ENCODE measurements at regions of chr6 and their contacts with region 1.

Region 1: DNA sequence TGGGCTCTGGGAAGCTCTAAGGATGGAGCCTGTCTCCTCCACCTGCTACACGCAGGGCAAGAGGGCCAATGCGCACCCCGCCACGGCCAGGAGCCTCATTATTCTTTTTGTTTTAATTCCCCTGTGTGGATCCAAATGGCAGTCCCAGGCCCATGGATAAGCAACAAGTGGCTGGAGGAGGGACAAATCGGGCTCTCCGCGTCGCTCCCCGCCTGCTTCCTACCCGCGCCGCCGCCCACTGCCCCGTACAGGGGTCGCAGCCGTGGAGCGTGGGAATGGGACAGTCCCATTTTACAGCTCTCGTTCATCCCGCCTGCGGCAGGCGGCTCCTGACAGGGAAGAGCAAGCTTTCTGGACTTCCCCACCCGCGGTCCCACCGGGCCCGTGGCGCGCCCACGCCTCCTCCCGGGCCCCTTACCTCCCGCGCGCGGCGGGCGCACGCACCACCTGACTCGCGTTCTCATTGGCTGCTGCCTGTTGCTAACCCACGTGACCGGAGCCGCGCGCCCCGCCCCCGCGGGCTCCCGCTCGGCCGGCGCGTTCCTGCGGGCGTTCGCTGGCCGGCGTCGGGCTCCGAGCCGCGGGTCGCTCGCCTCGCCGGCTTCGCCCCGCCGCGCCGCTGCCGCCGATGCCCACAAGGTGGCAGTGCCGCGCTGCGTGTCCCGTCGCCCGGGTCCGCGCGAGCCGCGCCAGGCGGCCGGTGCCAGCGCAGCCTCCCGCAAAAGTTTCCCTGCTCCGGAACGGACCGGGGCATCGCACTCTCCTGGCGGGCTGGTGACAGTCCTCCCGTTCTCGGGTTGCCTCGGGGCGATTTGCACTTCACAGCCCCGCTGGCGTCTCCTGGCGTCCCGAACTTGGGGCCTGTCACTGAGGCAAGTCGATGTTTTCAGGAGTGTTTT is 93.3 kb downstream of the CD83 start:
- DNase-seq: peak; percentile 79 to 98 (median 87)
- ATAC-seq: peak; percentile 95
- H3K4me3 ChIP-seq: peak overlapping the region; percentile 73
- H3K4me3 Mint-ChIP-seq: peak overlapping the region; percentile 81 to 90 (median 87)
- H3K27ac ChIP-seq: peak overlapping the region; percentile 65
- H3K27ac Mint-ChIP-seq: peak overlapping the region; percentile 6 to 93 (median 73)
- H3K4me1 ChIP-seq: peaks cover 8 to 14% of the 10 kb centered on the region in 2 donors
- H3K4me1 Mint-ChIP-seq: peaks cover 0 to 15% (median 11%) of the 10 kb centered on the region in 7 donors
- H3K27me3 ChIP-seq: no peaks in the 10 kb centered on the region
- H3K27me3 Mint-ChIP-seq: no peaks in the 10 kb centered on the region

Region 2: DNA sequence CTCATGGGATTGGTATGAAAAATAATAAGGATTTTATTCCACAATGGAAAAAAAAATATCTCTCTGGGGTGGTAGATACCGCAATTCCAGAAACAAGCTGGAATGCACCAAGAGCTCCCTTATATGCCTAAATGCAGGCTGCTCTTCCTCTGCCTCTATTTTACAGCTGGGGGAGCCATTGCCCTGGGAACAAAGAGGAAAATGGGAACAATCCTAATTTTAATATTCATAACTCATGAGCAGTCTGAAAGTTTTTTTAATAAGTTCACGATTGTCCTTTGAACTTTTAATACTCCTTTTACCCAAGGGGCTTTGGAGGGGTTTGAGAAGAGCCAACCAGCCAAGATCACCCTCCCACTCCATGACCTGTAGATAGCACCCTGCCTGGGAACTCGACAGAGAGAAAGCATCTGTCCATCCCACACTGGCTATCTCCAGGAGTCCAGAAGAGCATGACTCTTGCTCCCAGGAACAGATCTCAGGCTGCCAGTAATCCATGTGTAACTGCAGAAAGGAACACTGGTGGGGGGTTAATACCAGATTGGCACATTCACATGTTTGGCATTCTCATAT is 18.6 kb before region 1 on chr6:
- CTCF ChIA-PET with region 1: no interaction called
- POLR2A ChIA-PET with region 1: no interaction called
- intact Hi-C with region 1: no loop called
- DNase-seq: no peak
- ATAC-seq: no peak
- H3K4me3 ChIP-seq: no peak overlapping the region
- H3K4me3 Mint-ChIP-seq: no peak overlapping the region
- H3K27ac ChIP-seq: no peak overlapping the region
- H3K27ac Mint-ChIP-seq: no peak overlapping the region
- H3K4me1 ChIP-seq: no peaks in the 10 kb centered on the region
- H3K4me1 Mint-ChIP-seq: no peaks in the 10 kb centered on the region
- H3K27me3 ChIP-seq: no peaks in the 10 kb centered on the region
- H3K27me3 Mint-ChIP-seq: peaks cover 0 to 38% (median 8%) of the 10 kb centered on the region in 5 donors

Region 3: DNA sequence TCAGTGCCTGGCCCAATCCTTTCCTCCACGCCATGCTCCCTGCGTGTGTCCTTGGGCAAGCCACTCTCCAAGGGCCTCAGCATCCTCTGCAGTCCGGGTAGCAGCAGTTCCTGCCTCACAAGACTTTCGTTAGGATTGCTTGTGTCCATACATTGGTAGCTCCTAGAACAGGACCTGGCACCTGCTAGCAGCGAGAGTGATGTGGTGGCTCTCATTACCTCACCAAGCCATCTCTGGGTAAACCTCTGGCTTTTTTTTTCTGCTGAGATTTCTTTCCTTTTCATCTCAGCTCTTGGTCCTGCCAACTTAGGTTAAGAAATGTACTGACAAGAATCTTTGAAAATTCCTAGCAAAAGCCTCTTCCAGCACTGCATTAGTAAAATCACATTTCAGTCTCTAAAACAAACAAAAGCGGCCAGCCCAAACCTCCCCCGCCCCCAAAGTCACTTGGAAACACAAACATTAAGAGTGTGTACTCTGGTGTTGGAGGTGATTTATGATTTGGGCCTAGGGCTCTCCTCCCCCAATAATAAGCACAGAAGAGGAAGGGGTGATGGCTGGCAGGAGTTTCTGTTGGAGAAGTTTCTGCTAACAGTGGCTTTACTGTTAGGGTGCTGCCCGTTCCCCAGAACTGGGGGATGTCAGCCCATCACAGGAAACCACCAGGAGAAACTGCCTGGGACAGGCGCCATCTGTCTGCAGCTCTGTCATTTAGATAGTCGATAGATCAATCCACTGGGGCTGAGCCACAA is 105.9 kb after region 1 on chr6:
- CTCF ChIA-PET with region 1: interaction called, 9 read pairs
- POLR2A ChIA-PET with region 1: no interaction called
- intact Hi-C with region 1: loop called (anchors 1 kb)
- DNase-seq: peak in 3 of 9 donors; percentile 3 to 11 (median 9)
- ATAC-seq: no peak
- H3K4me3 ChIP-seq: no peak overlapping the region
- H3K4me3 Mint-ChIP-seq: no peak overlapping the region
- H3K27ac ChIP-seq: no peak overlapping the region
- H3K27ac Mint-ChIP-seq: peak overlapping the region in 3 of 9 donors; percentile 25 to 50 (median 35)
- H3K4me1 ChIP-seq: peaks cover 0 to 3% of the 10 kb centered on the region in 2 donors
- H3K4me1 Mint-ChIP-seq: peaks cover 4 to 22% (median 20%) of the 10 kb centered on the region in 7 donors
- H3K27me3 ChIP-seq: no peaks in the 10 kb centered on the region
- H3K27me3 Mint-ChIP-seq: peaks cover 0 to 4% (median 0%) of the 10 kb centered on the region in 5 donors

Region 4: GRCh38 chr6:14371530-14371929 is 160.6 kb after region 1 on chr6:
- CTCF ChIA-PET with region 1: no interaction called
- POLR2A ChIA-PET with region 1: no interaction called
- intact Hi-C with region 1: no loop called
- DNase-seq: no peak
- ATAC-seq: peak; percentile 37
- H3K4me3 ChIP-seq: no peak overlapping the region
- H3K4me3 Mint-ChIP-seq: peak overlapping the region in 6 of 10 donors; percentile 1 to 74 (median 15)
- H3K27ac ChIP-seq: no peak overlapping the region
- H3K27ac Mint-ChIP-seq: no peak overlapping the region
- H3K4me1 ChIP-seq: no peaks in the 10 kb centered on the region
- H3K4me1 Mint-ChIP-seq: peaks cover 6 to 19% (median 13%) of the 10 kb centered on the region in 7 donors
- H3K27me3 ChIP-seq: no peaks in the 10 kb centered on the region
- H3K27me3 Mint-ChIP-seq: peaks cover 0 to 4% (median 0%) of the 10 kb centered on the region in 5 donors

Region 5: DNA sequence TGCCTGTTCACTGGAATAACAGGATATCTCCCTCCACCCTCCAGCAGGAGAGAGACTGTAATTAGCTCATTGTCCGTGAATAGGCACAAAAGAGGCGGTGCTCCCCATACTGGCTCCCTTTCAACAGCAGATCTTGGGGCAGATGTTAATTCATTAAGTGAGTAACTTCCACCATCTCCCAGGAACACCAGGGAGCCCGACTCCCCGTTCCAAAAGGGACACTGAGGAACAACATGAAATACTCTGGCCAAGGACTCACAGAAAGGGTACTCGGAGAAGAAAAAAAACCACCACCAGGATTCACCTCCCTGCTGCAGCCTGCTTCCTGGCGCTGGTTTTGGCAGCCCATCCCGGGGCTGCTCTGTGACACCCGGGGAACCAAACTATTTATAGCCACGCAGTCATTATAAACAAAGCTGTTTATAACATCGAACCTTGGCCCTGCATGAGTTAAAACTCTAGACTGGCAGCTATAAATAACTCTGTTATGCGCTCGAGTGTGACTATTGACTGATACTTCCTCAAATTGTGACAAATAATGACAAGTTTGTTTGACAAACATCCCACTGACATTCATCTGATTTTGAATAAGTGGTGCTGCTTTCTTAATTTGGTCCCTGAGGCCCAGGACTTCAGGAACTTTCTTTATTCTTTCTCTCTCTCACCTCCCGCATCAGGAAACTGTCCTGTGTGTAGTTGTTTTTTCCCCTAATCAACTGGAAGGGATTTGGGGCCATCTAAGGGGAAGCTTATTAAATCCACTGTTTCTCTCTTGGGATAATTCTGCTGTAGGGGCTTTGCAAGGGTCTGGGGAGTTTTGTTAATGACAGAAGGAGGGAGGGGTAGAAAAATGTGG is 428.2 kb after region 1 on chr6:
- CTCF ChIA-PET with region 1: no interaction called
- POLR2A ChIA-PET with region 1: no interaction called
- intact Hi-C with region 1: loop called (anchors 1 kb)
- DNase-seq: no peak
- ATAC-seq: peak; percentile 54
- H3K4me3 ChIP-seq: no peak overlapping the region
- H3K4me3 Mint-ChIP-seq: peak overlapping the region in 1 of 10 donors; percentile 14
- H3K27ac ChIP-seq: no peak overlapping the region
- H3K27ac Mint-ChIP-seq: peak overlapping the region in 2 of 9 donors; percentile 25 to 46
- H3K4me1 ChIP-seq: peaks cover 27 to 29% of the 10 kb centered on the region in 2 donors
- H3K4me1 Mint-ChIP-seq: peaks cover 41 to 63% (median 52%) of the 10 kb centered on the region in 7 donors
- H3K27me3 ChIP-seq: no peaks in the 10 kb centered on the region
- H3K27me3 Mint-ChIP-seq: peaks cover 0 to 25% (median 4%) of the 10 kb centered on the region in 5 donors

Region 6: DNA sequence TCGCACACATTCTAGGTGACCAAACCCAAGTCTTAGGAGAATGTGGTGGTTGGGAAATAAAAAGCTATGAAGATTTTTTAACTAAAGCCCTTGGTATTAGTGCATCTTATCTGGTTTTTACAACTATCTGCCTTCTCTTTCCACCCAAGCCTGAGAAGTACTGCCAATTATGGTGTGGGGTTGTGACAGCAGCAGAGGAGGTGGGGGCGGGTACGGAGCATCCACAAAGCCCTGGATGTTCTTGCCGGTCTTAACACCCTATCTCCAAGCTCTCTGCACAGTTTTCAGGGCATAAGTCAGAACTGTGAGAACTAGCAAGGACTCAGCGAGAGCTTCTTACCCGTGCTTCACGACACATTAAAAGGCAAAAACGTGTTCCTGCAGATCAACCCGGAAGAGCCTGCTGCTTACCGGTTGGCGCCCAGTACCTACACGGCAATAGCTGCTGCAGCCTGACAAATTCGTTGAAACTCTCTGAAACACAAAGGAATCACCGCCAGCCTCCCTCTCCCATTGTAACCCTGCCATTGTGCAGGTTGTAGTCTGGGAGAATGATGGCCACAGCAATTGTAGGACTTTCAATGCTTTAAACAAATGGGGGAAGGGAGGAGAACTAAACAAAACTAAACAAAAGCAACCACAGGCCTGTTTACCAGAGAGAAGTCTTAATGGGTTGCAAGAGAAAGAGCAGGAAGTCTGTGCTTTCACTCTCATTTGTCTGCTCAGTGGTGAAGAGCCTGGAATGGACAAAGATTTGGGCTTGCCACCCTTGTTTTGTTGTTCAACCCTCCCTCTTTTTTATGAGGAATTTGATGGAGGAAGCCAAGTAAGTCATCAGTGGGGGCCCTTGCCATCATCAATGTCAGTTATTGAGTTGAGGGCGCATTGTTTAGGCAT is 573.9 kb after region 1 on chr6:
- CTCF ChIA-PET with region 1: no interaction called
- POLR2A ChIA-PET with region 1: no interaction called
- intact Hi-C with region 1: loop called in 1 of 2 experiments (anchors 10 kb)
- DNase-seq: peak in 7 of 9 donors; percentile 20 to 58 (median 47)
- ATAC-seq: peak; percentile 67
- H3K4me3 ChIP-seq: peak overlapping the region; percentile 18
- H3K4me3 Mint-ChIP-seq: peak overlapping the region; percentile 26 to 86 (median 82)
- H3K27ac ChIP-seq: peak overlapping the region; percentile 46
- H3K27ac Mint-ChIP-seq: peak overlapping the region; percentile 78 to 97 (median 90)
- H3K4me1 ChIP-seq: peaks cover 0 to 12% of the 10 kb centered on the region in 2 donors
- H3K4me1 Mint-ChIP-seq: peaks cover 0 to 35% (median 19%) of the 10 kb centered on the region in 7 donors
- H3K27me3 ChIP-seq: no peaks in the 10 kb centered on the region
- H3K27me3 Mint-ChIP-seq: no peaks in the 10 kb centered on the region

Region 7: DNA sequence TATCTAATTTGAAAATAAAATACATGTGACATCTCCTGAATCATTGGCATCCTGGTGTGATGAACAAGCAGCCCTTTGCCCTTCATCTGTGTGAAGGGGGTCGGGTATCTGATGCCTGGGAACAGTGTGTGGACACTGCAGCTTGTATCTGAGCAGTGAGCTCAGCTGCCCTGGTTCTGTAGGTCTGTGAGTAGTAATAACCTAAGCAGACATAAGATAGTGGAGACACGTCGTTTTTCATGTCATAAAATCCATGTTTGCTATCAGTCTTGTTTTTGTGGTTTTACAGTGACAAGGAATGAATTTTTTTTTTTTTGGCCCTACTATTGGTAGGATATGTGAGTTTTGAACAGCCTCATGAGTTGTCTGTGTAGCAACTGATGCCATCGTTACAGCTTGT is 1168.0 kb after region 1 on chr6:
- CTCF ChIA-PET with region 1: no interaction called
- POLR2A ChIA-PET with region 1: no interaction called
- intact Hi-C with region 1: no loop called
- DNase-seq: no peak
- ATAC-seq: no peak
- H3K4me3 ChIP-seq: no peak overlapping the region
- H3K4me3 Mint-ChIP-seq: peak overlapping the region in 1 of 10 donors; percentile 15
- H3K27ac ChIP-seq: no peak overlapping the region
- H3K27ac Mint-ChIP-seq: peak overlapping the region in 1 of 9 donors; percentile 67
- H3K4me1 ChIP-seq: peaks cover 6 to 19% of the 10 kb centered on the region in 2 donors
- H3K4me1 Mint-ChIP-seq: peaks cover 43 to 71% (median 61%) of the 10 kb centered on the region in 7 donors
- H3K27me3 ChIP-seq: no peaks in the 10 kb centered on the region
- H3K27me3 Mint-ChIP-seq: no peaks in the 10 kb centered on the region

Region 8: GRCh38 chr6:15441215-15441868 is 1230.4 kb after region 1 on chr6:
- CTCF ChIA-PET with region 1: no interaction called
- POLR2A ChIA-PET with region 1: no interaction called
- intact Hi-C with region 1: loop called (anchors 2 to 10 kb)
- DNase-seq: peak in 5 of 9 donors; percentile 36 to 55 (median 41)
- ATAC-seq: peak; percentile 74
- H3K4me3 ChIP-seq: no peak overlapping the region
- H3K4me3 Mint-ChIP-seq: peak overlapping the region in 1 of 10 donors; percentile 42
- H3K27ac ChIP-seq: no peak overlapping the region
- H3K27ac Mint-ChIP-seq: peak overlapping the region in 1 of 9 donors; percentile 21
- H3K4me1 ChIP-seq: peaks cover 14 to 20% of the 10 kb centered on the region in 2 donors
- H3K4me1 Mint-ChIP-seq: peaks cover 54 to 88% (median 74%) of the 10 kb centered on the region in 7 donors
- H3K27me3 ChIP-seq: no peaks in the 10 kb centered on the region
- H3K27me3 Mint-ChIP-seq: no peaks in the 10 kb centered on the region

Region 9: DNA sequence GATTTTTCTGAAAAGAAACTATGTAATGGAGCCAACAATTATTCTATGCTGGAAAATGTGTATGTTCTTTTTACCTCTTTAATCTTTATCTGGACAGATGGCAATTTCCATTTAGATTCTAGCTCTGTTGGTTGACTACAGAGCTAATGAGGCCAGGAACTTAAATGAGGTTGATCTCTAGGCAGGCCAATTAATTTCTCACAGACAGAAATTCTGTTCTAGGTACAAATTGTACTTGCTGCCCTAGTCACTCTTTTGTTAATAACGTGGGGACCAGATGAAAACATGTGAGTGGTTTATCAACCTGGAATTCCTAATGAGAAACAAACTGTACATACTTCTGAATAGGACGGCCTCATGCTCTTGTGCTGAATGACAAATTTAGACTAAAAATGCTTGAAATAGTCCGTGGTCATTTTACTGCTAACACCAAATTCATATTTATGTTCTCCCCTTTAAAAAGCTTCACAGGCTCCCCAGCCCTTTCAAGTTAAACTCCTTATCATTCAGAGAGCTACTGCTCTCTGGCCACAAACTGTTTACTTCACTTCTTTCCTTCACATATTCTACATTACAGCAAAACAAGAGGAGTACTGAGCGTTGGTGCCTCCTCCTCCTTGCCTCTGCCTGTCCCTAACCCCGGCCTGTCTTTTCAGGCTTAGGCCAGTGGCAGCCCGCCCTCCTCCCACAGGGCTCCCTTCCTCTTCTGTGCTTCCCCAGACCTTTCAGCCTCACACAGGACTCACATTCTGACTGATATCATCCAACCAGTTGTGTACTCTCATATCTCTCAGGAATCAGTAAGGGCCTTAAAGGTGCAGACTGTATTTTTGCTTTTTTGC is 1410.5 kb after region 1 on chr6:
- CTCF ChIA-PET with region 1: no interaction called
- POLR2A ChIA-PET with region 1: no interaction called
- intact Hi-C with region 1: loop called (anchors 1 to 2 kb)
- DNase-seq: peak in 1 of 9 donors; percentile 34
- ATAC-seq: peak; percentile 86
- H3K4me3 ChIP-seq: no peak overlapping the region
- H3K4me3 Mint-ChIP-seq: peak overlapping the region in 1 of 10 donors; percentile 5
- H3K27ac ChIP-seq: no peak overlapping the region
- H3K27ac Mint-ChIP-seq: peak overlapping the region in 2 of 9 donors; percentile 3 to 52
- H3K4me1 ChIP-seq: no peaks in the 10 kb centered on the region
- H3K4me1 Mint-ChIP-seq: peaks cover 19 to 55% (median 42%) of the 10 kb centered on the region in 7 donors
- H3K27me3 ChIP-seq: no peaks in the 10 kb centered on the region
- H3K27me3 Mint-ChIP-seq: no peaks in the 10 kb centered on the region

Measured in naive thymus-derived CD4-positive, alpha-beta T cell (primary cell).